ENCODE measurements at regions of chr4 and their contacts with region 1.

Region 1: DNA sequence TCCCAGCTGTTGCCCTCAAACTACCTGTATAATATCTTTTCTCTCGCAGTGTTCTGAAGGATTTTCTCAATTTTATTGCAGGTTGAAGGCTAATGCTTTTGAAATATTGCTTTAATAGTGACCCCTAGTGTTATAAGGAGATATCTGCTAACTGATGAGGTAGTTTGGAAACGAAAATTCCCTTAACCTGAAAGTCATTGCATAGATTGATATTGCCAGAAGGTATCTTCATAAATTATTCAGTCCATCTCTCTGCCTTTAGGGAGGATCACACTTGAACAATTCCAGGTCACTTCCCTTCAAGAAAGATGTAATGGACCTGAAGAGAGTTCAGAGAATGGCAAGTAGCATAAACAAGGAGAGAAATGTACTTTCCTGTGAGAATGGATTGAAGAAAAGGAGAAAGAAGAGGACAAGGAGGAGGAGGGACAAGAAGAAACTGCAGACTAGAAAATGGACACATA is 44.1 kb downstream of the TIGD4 start:
- DNase-seq: no peak
- ATAC-seq: no peak
- H3K4me3 Mint-ChIP-seq: no peak overlapping the region
- H3K27ac Mint-ChIP-seq: no peak overlapping the region
- H3K4me1 Mint-ChIP-seq: peaks cover 2% of the 10 kb centered on the region
- H3K27me3 Mint-ChIP-seq: peaks cover 3% of the 10 kb centered on the region

Region 2: GRCh38 chr4:152408514-152409327 is 326.7 kb before region 1 on chr4:
- CTCF ChIA-PET with region 1: interaction called, 6 read pairs
- POLR2A ChIA-PET with region 1: no interaction called
- intact Hi-C with region 1: loop called (anchors 1 to 10 kb)
- DNase-seq: peak; percentile 18
- ATAC-seq: peak; percentile 65
- H3K4me3 Mint-ChIP-seq: no peak overlapping the region
- H3K27ac Mint-ChIP-seq: no peak overlapping the region
- H3K4me1 Mint-ChIP-seq: peaks cover 13% of the 10 kb centered on the region
- H3K27me3 Mint-ChIP-seq: no peaks in the 10 kb centered on the region

Region 3: GRCh38 chr4:152436384-152436783 is 299.0 kb before region 1 on chr4:
- CTCF ChIA-PET with region 1: no interaction called
- POLR2A ChIA-PET with region 1: no interaction called
- intact Hi-C with region 1: no loop called
- DNase-seq: peak; percentile 20
- ATAC-seq: peak; percentile 16
- H3K4me3 Mint-ChIP-seq: no peak overlapping the region
- H3K27ac Mint-ChIP-seq: no peak overlapping the region
- H3K4me1 Mint-ChIP-seq: peaks cover 26% of the 10 kb centered on the region
- H3K27me3 Mint-ChIP-seq: no peaks in the 10 kb centered on the region

Region 4: DNA sequence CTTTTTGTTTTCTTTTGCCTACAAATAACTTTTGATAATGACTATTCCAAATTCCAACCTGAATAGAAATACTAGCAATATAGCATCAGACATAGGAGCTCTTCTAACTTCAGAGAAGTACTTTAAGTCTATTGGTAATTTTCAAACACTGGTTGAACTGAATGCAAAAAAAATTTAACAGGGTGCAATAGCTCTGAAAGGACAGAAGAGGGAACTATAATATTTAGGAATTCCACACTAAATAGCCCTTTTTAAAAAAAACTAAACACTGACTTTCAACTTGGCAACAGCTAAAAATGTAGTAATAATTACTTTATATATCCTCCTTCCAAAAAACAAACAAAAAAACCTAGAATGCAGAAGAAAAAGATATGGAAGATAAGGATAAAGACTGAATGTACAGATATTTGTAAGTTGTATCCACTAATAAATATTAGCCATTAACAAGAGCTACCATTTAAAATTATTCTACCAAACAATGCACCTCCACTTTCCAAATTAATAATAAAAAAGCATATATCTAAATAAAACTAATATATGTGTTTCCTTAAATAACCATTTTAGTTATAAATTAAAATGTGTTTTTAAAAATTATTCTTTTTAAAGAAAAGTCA is 280.9 kb before region 1 on chr4:
- CTCF ChIA-PET with region 1: interaction called, 5 read pairs
- POLR2A ChIA-PET with region 1: no interaction called
- intact Hi-C with region 1: loop called in 1 of 2 experiments (anchors 2 kb)
- DNase-seq: no peak
- ATAC-seq: no peak
- H3K4me3 Mint-ChIP-seq: no peak overlapping the region
- H3K27ac Mint-ChIP-seq: no peak overlapping the region
- H3K4me1 Mint-ChIP-seq: peaks cover 34% of the 10 kb centered on the region
- H3K27me3 Mint-ChIP-seq: no peaks in the 10 kb centered on the region